ENCODE measurements at regions of chr1 and their contacts with region 1.

Region 1: GRCh38 chr1:31944205-31945089 is 6.3 kb upstream of the PTP4A2 start:
- DNase-seq: peak; percentile 91
- ATAC-seq: peak; percentile 65
- H3K4me3 Mint-ChIP-seq: peak overlapping the region; percentile 65
- H3K27ac Mint-ChIP-seq: peak overlapping the region; percentile 88
- H3K4me1 Mint-ChIP-seq: peaks cover 52% of the 10 kb centered on the region
- H3K27me3 Mint-ChIP-seq: no peaks in the 10 kb centered on the region

Region 2: DNA sequence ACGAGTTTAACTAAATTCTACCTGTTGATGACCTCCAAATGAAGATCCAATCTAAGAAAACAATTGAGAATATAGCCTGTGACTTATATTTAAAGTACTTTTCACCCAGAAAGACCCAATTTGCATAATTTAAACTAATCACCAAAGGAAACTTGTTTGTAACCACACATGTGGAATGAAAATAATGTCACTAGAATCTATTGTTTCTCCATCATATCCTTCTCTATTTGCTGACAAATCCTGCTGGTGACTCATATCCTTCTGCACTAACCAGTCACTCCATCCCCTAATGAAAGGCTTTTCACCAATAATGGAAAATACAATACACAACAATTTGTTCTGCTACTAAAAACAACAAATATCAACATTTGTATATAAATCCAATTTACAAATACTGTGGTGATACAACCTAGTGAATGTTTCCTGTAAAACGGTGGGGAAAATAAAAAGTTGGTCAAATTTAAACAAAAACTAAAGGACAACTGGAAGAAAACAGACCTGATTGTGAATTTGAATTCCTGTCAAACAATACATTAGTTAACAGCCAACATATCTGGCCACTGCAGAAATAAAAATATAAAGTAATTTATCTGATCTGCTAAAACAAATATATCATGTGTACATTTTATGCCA is 12.7 kb before region 1 on chr1:
- CTCF ChIA-PET with region 1: interaction called, 10 read pairs
- POLR2A ChIA-PET with region 1: interaction called, 7 read pairs
- intact Hi-C with region 1: loop called in 1 of 2 experiments (anchors 2 kb)
- DNase-seq: no peak
- ATAC-seq: peak; percentile 4
- H3K4me3 Mint-ChIP-seq: peak overlapping the region; percentile 91
- H3K27ac Mint-ChIP-seq: peak overlapping the region; percentile 91
- H3K4me1 Mint-ChIP-seq: peaks cover 90% of the 10 kb centered on the region
- H3K27me3 Mint-ChIP-seq: no peaks in the 10 kb centered on the region

Region 3: GRCh38 chr1:31961536-31961935 is 17.1 kb after region 1 on chr1:
- CTCF ChIA-PET with region 1: interaction called, 175 read pairs
- POLR2A ChIA-PET with region 1: interaction called, 41 read pairs
- intact Hi-C with region 1: loop called (anchors 1 kb)
- DNase-seq: no peak
- ATAC-seq: no peak
- H3K4me3 Mint-ChIP-seq: no peak overlapping the region
- H3K27ac Mint-ChIP-seq: peak overlapping the region; percentile 81
- H3K4me1 Mint-ChIP-seq: peaks cover 67% of the 10 kb centered on the region
- H3K27me3 Mint-ChIP-seq: no peaks in the 10 kb centered on the region